Activated T-helper 1 cell treated with anti-CD3 and anti-CD28 coated beads, Interleukin-12 subunit alpha, Interleukin-12 subunit beta, Interleukin-2, Interleukin-4 antibody, amounts not matched to agents 30 ng/mL and 10 ng/mL and 1 ng/mL, durations not matched to agents 14 hours and 24 hours and 36 hours (primary cell): ENCODE measurements at regions of chr2 and their contacts with region 1.

Region 1: GRCh38 chr2:53303012-53303578 is 464.5 kb upstream of the CHAC2 start:
- DNase-seq: no peak
- H3K4me3 Mint-ChIP-seq: no peak overlapping the region
- H3K27ac Mint-ChIP-seq: no peak overlapping the region
- H3K4me1 Mint-ChIP-seq: no peaks in the 10 kb centered on the region
- H3K27me3 Mint-ChIP-seq: no peaks in the 10 kb centered on the region

Region 2: DNA sequence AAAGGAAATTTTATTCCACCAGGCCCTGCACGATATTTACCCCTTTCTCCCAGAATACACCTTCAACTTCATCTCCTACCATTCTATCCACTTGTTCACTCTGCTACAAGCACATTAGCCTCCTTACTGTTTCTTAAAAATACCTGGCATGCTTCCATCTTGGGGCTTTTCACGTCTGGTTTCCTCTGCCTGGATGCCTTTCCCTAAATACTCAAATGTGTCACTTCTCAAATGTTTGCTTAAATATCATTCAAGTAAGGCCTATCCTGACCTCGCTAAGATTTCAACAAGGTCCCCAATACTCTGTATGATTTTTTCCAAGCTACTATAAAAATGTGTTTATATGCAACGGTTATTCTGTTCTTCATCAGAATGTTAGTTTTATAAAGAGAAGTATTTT is 31.5 kb after region 1 on chr2:
- intact Hi-C with region 1: loop called (anchors 1 kb)
- DNase-seq: no peak
- H3K4me3 Mint-ChIP-seq: no peak overlapping the region
- H3K27ac Mint-ChIP-seq: no peak overlapping the region
- H3K4me1 Mint-ChIP-seq: no peaks in the 10 kb centered on the region
- H3K27me3 Mint-ChIP-seq: no peaks in the 10 kb centered on the region